ENCODE measurements at regions of chr2 and their contacts with region 1.

Region 1: GRCh38 chr2:204157684-204158083 is 221.1 kb downstream of the ICOS start:
- DNase-seq: no peak
- H3K4me3 ChIP-seq: no peak overlapping the region
- H3K27ac ChIP-seq: no peak overlapping the region
- H3K4me1 ChIP-seq: no peaks in the 10 kb centered on the region
- H3K27me3 ChIP-seq: no peaks in the 10 kb centered on the region
- CTCF ChIP-seq: no peak
- POLR2A ChIP-seq: no peak

Region 2: GRCh38 chr2:204177977-204178540 is 20.4 kb after region 1 on chr2:
- intact Hi-C with region 1: loop called (anchors 1 kb)
- DNase-seq: no peak
- H3K4me3 ChIP-seq: no peak overlapping the region
- H3K27ac ChIP-seq: no peak overlapping the region
- H3K4me1 ChIP-seq: no peaks in the 10 kb centered on the region
- H3K27me3 ChIP-seq: no peaks in the 10 kb centered on the region
- CTCF ChIP-seq: peak in 1 of 3 experiments; percentile 23
- POLR2A ChIP-seq: no peak

Measured in vagina (tissue), 2 donors.